Activated CD4-positive, alpha-beta T cell treated with anti-CD3 and anti-CD28 coated beads for 36 hours (primary cell): ENCODE measurements at regions of chr10 and their contacts with region 1.

Region 1: DNA sequence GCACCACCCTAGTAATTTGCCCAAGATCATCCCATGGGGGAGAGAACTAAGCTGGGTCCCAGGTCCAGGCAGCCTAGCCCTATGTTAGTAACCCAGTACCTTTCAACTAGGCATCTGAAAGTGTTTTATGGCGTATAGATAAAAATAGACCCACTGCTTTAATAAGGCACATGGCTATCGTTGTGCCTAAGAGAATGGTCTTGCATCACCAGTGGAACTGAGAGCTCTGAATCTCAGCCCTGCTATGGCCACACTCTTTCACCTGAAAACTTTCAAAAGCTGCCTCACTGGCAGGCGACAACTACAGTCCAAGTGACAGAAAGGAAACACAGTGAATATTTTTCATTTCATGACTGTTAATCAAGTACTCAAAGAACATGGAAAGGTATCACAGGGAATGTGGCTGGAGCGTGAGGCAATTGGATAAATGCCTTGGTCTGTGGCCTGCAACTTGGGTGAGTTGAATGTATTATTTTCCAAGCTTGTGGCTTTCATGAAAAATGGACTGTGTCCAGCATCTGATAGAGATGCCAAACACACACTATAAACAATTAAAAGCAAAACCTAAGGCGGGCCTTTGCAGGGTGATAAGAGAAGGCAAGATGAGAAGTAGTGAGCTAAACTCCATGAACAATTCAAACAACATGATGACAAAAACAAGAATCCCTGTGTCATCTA is 18.0 kb upstream of the SFMBT2 start:
- DNase-seq: no peak
- ATAC-seq: no peak
- H3K4me3 Mint-ChIP-seq: no peak overlapping the region
- H3K27ac Mint-ChIP-seq: no peak overlapping the region
- H3K4me1 Mint-ChIP-seq: peaks cover 17% of the 10 kb centered on the region
- H3K27me3 Mint-ChIP-seq: no peaks in the 10 kb centered on the region

Region 2: DNA sequence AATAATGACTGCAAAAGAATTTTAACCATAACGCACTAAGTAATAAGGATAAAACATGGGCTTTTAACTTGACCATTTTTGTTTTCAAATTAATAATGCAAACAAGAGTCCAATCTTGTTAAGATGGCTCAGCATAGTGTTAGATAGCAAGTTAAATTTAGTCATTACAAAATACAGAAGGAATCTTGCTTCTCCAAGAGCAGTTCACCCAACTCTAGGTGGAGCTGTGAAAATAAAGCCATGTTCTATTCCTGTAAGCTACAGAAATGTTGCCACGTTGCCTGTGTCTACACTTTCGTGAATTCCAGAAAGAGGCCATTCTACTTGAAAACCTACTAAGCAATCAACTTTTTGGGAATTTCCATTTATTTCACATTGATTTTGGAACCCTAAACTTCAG is 209.8 kb before region 1 on chr10:
- CTCF ChIA-PET with region 1: no interaction called
- POLR2A ChIA-PET with region 1: no interaction called
- intact Hi-C with region 1: no loop called
- DNase-seq: no peak
- ATAC-seq: no peak
- H3K4me3 Mint-ChIP-seq: no peak overlapping the region
- H3K27ac Mint-ChIP-seq: no peak overlapping the region
- H3K4me1 Mint-ChIP-seq: no peaks in the 10 kb centered on the region
- H3K27me3 Mint-ChIP-seq: no peaks in the 10 kb centered on the region

Region 3: DNA sequence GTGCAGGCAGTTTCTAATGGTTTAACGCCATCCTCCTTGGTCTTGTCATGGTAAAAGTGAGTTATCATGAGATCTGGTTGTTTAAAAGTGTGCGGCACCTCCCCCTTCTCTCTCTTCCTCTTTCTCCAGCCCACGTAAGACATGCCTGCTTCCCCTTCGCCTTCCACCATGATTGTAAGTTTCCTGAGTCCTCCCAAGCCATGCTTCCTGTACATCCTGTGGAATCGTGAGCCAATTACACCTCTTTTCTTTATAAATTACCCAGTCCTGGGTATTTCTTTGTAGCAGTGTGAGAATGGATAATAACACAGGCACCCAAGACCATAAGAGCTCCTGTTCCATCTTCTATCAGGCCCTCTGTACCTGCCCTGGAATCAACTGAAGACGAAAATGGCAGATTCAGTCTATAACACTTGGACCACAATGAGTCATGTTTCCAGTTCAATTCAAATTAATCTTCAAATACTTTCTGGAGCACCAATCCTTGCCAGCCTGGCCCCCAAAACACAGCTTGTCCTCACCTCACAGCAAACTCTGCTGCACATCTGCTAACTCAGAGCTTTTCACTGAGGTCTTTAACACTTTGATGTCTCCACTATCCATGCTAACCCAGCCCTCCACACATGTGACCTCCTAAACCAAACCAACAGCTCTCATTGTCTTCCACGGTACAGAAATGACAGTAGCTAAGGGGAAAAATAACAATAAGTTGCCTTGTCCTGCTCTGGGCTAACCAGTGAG is 91.2 kb before region 1 on chr10:
- CTCF ChIA-PET with region 1: no interaction called
- POLR2A ChIA-PET with region 1: no interaction called
- intact Hi-C with region 1: no loop called
- DNase-seq: peak; percentile 31
- ATAC-seq: peak; percentile 65
- H3K4me3 Mint-ChIP-seq: no peak overlapping the region
- H3K27ac Mint-ChIP-seq: peak overlapping the region; percentile 85
- H3K4me1 Mint-ChIP-seq: peaks cover 65% of the 10 kb centered on the region
- H3K27me3 Mint-ChIP-seq: no peaks in the 10 kb centered on the region

Region 4: DNA sequence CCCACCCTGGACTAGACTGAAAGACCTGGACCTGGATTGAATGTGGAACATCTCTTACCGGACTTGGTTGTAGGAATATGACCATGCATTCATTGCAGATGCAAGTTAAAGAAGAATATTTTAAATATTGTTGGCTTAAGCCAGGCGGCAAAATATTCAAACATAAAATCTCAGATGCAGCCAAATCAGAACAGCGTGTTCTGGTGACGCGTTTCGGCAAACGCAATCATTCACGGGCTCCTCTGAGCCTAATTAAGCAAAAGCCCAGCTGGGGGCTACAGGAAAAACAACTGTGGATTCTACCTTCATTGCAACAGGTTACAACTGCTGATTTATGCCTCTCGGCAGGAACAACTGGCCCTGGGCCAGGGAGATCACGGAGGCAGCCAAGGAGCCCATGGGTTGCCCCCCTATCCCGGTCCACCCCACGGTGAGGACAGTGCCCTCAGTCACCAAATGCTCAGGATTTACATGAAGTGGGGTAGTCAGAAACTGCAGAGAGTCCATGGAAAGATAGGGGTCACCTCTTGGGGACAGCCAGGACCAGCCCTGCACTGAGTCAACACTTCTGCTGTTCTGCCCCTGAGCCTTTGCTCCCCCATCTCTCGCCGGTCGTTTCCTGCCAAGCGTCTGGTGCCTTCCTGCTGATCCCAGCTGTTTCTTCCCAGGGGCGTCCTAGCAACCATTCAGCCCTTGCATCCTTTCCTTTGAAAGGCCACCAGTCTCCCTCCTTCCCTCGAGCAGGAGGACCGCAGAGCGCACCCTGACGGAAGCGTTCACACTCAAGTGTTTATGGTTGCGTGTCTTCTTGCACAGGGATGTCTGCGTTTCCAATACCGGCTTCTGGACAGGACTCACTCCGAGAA is 46.5 kb after region 1 on chr10:
- CTCF ChIA-PET with region 1: no interaction called
- POLR2A ChIA-PET with region 1: no interaction called
- intact Hi-C with region 1: loop called in 1 of 2 experiments (anchors 5 kb)
- DNase-seq: no peak
- ATAC-seq: no peak
- H3K4me3 Mint-ChIP-seq: no peak overlapping the region
- H3K27ac Mint-ChIP-seq: no peak overlapping the region
- H3K4me1 Mint-ChIP-seq: peaks cover 49% of the 10 kb centered on the region
- H3K27me3 Mint-ChIP-seq: no peaks in the 10 kb centered on the region